ENCODE measurements at regions of chr22 and their contacts with region 1.

Region 1: GRCh38 chr22:27885977-27886842 is 32.8 kb downstream of the PITPNB start:
- DNase-seq: peak in 8 of 9 experiments; percentile 20 to 61 (median 50)
- ATAC-seq: peak; percentile 71
- H3K4me3 ChIP-seq: no peak overlapping the region
- H3K4me3 Mint-ChIP-seq: no peak overlapping the region
- H3K27ac ChIP-seq: no peak overlapping the region
- H3K27ac Mint-ChIP-seq: peak overlapping the region; percentile 10
- H3K4me1 ChIP-seq: no peaks in the 10 kb centered on the region
- H3K4me1 Mint-ChIP-seq: no peaks in the 10 kb centered on the region
- H3K27me3 ChIP-seq: no peaks in the 10 kb centered on the region
- H3K27me3 Mint-ChIP-seq: no peaks in the 10 kb centered on the region
- CTCF ChIP-seq: peak; percentile 98

Region 2: GRCh38 chr22:27842669-27843431 is 43.4 kb before region 1 on chr22:
- CTCF ChIA-PET with region 1: no interaction called
- POLR2A ChIA-PET with region 1: no interaction called
- intact Hi-C with region 1: no loop called
- DNase-seq: no peak
- ATAC-seq: no peak
- H3K4me3 ChIP-seq: no peak overlapping the region
- H3K4me3 Mint-ChIP-seq: no peak overlapping the region
- H3K27ac ChIP-seq: no peak overlapping the region
- H3K27ac Mint-ChIP-seq: no peak overlapping the region
- H3K4me1 ChIP-seq: no peaks in the 10 kb centered on the region
- H3K4me1 Mint-ChIP-seq: no peaks in the 10 kb centered on the region
- H3K27me3 ChIP-seq: no peaks in the 10 kb centered on the region
- H3K27me3 Mint-ChIP-seq: no peaks in the 10 kb centered on the region
- CTCF ChIP-seq: no peak

Region 3: DNA sequence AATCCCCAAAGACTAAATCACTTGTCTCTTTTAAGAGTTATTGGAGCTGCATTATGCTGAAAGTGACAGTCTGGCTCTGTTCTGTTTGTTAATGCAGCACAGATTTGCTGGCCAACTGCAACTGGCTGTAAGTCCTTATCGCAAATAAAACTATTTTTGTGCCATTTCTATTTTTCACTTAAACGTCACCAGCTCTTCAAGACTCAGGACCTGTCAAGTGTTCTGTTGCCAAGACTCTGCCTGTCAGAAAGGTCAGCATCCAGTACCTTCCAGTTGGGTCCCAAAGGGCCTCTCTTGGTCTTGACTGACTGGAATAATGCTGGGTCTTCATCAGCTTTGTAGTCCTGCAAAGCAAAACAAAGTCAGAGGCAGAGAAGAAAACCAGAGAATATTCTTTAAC is 12.7 kb before region 1 on chr22:
- CTCF ChIA-PET with region 1: interaction called, 25 read pairs
- POLR2A ChIA-PET with region 1: no interaction called
- intact Hi-C with region 1: no loop called
- DNase-seq: no peak
- ATAC-seq: no peak
- H3K4me3 ChIP-seq: no peak overlapping the region
- H3K4me3 Mint-ChIP-seq: no peak overlapping the region
- H3K27ac ChIP-seq: no peak overlapping the region
- H3K27ac Mint-ChIP-seq: no peak overlapping the region
- H3K4me1 ChIP-seq: peaks cover 21% of the 10 kb centered on the region
- H3K4me1 Mint-ChIP-seq: peaks cover 45% of the 10 kb centered on the region
- H3K27me3 ChIP-seq: no peaks in the 10 kb centered on the region
- H3K27me3 Mint-ChIP-seq: no peaks in the 10 kb centered on the region
- CTCF ChIP-seq: no peak

Region 4: DNA sequence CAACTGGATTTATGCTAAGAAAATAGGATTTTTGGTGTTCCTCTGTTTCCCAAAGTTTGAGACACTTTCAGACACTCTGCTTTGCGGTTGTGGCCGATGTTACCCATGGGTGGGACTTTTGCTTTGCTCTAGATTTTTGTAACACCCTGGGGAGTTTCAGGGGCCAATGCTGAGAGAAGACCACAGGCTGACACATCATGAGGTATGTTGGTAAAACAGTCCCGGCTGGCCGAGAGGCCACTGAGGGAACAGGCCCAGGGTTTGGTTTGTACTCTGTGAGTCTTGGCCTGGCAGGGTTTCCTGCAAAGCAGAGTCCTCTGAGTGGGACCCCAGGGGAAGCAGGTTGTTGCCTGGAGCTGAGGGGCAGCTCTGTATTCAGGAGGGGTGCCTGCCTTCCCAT is 111.3 kb after region 1 on chr22:
- CTCF ChIA-PET with region 1: interaction called, 20 read pairs
- POLR2A ChIA-PET with region 1: no interaction called
- intact Hi-C with region 1: no loop called
- DNase-seq: no peak
- ATAC-seq: no peak
- H3K4me3 ChIP-seq: no peak overlapping the region
- H3K4me3 Mint-ChIP-seq: no peak overlapping the region
- H3K27ac ChIP-seq: no peak overlapping the region
- H3K27ac Mint-ChIP-seq: no peak overlapping the region
- H3K4me1 ChIP-seq: no peaks in the 10 kb centered on the region
- H3K4me1 Mint-ChIP-seq: no peaks in the 10 kb centered on the region
- H3K27me3 ChIP-seq: no peaks in the 10 kb centered on the region
- H3K27me3 Mint-ChIP-seq: no peaks in the 10 kb centered on the region
- CTCF ChIP-seq: no peak

Region 5: DNA sequence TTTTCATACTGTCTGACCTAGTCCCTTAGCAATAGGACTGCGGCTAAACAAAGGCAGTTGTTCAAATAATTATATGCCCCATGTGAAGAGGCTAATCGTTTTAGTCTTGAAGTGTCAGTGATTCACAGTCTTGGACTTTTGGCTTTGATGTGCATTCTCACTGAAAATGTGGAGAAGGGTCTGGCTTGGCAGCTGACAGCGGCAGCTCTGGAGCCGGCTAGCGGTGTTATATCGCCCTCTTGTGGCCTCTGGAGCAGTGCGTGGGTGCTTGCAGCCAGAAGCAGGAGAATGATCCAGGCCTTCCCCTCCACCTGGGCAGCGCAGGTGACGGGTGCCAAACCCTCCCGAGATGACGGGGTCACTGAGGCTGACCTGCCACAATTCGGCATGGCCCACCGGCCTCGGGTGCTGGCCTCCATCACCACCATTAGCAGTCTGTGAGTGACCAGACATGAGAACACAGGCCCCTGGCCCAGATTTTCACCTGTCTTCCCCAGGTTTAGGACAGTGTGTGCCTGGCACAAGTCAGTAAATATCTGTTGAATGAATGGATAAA is 123.1 kb after region 1 on chr22:
- CTCF ChIA-PET with region 1: interaction called, 93 read pairs
- POLR2A ChIA-PET with region 1: no interaction called
- intact Hi-C with region 1: loop called (anchors 1 kb)
- DNase-seq: peak; percentile 46 to 81 (median 71)
- ATAC-seq: peak; percentile 71
- H3K4me3 ChIP-seq: no peak overlapping the region
- H3K4me3 Mint-ChIP-seq: no peak overlapping the region
- H3K27ac ChIP-seq: no peak overlapping the region
- H3K27ac Mint-ChIP-seq: no peak overlapping the region
- H3K4me1 ChIP-seq: no peaks in the 10 kb centered on the region
- H3K4me1 Mint-ChIP-seq: no peaks in the 10 kb centered on the region
- H3K27me3 ChIP-seq: no peaks in the 10 kb centered on the region
- H3K27me3 Mint-ChIP-seq: no peaks in the 10 kb centered on the region
- CTCF ChIP-seq: peak; percentile 92

Region 6: GRCh38 chr22:28594797-28595462 is 708.7 kb after region 1 on chr22:
- CTCF ChIA-PET with region 1: interaction called, 3 read pairs
- POLR2A ChIA-PET with region 1: no interaction called
- intact Hi-C with region 1: loop called (anchors 2 to 10 kb)
- DNase-seq: peak in 2 of 9 experiments; percentile 38 to 56
- ATAC-seq: peak; percentile 76
- H3K4me3 ChIP-seq: no peak overlapping the region
- H3K4me3 Mint-ChIP-seq: no peak overlapping the region
- H3K27ac ChIP-seq: no peak overlapping the region
- H3K27ac Mint-ChIP-seq: no peak overlapping the region
- H3K4me1 ChIP-seq: no peaks in the 10 kb centered on the region
- H3K4me1 Mint-ChIP-seq: no peaks in the 10 kb centered on the region
- H3K27me3 ChIP-seq: no peaks in the 10 kb centered on the region
- H3K27me3 Mint-ChIP-seq: peaks cover 21% of the 10 kb centered on the region
- CTCF ChIP-seq: peak; percentile 79